ENCODE measurements at regions of chr4 and their contacts with region 1.

Region 1: GRCh38 chr4:10260777-10261176 is 144.2 kb upstream of the WDR1 start:
- H3K4me3 Mint-ChIP-seq: no peak overlapping the region
- H3K27ac Mint-ChIP-seq: no peak overlapping the region
- H3K4me1 Mint-ChIP-seq: no peaks in the 10 kb centered on the region
- H3K27me3 Mint-ChIP-seq: peaks cover 10% of the 10 kb centered on the region

Region 2: DNA sequence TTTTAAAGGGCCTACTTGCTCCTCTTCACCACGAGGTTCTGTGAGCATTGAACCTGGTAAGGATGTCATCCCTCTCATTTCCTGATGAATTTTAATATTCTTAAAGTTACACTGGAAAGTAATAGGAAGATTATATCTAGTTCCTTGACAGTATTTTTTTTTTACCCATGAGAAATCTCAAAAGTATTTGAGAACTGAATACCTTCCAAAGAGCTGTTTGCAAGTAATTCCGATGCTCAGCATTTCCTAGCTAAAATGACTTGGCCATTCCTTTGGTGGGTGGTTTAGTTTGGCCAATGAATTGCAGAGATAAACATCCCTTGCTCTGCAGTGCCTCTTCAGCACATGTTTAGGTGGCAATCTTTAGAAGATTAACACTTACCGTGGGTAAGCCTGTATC is 34.0 kb before region 1 on chr4:
- intact Hi-C with region 1: no loop called
- H3K4me3 Mint-ChIP-seq: no peak overlapping the region
- H3K27ac Mint-ChIP-seq: no peak overlapping the region
- H3K4me1 Mint-ChIP-seq: no peaks in the 10 kb centered on the region
- H3K27me3 Mint-ChIP-seq: no peaks in the 10 kb centered on the region

Region 3: GRCh38 chr4:10395971-10396580 is 135.3 kb after region 1 on chr4:
- intact Hi-C with region 1: loop called (anchors 10 kb)
- H3K4me3 Mint-ChIP-seq: no peak overlapping the region
- H3K27ac Mint-ChIP-seq: no peak overlapping the region
- H3K4me1 Mint-ChIP-seq: no peaks in the 10 kb centered on the region
- H3K27me3 Mint-ChIP-seq: peaks cover 8% of the 10 kb centered on the region

Measured in dendritic cell treated with granulocyte-macrophage colony-stimulating factor and Interleukin-4, amounts not matched to agents 40 ng/mL and 50 ng/mL, for 4 days (primary cell).